T-cell (primary cell): ENCODE measurements at regions of chr9 and their contacts with region 1.

Region 1: DNA sequence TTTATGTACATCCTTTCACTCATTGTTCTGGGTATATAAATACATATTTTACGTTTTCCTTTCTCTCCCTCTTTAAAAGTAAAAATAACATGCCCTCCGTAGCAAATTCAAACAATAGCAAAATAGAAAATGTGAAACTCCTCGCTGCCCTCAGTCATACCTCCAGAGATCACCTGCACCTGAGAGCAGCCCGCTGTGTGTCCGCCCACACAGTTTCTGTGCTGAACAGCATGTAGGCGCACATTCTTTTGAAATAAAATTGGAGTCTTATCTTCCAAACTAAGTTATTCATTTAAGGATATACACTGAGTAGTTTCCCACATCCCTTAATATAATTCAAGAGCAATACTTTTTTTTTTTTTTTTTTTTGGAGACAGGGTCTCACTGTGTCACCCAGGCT is 255.7 kb downstream of the AOPEP start:
- DNase-seq: no peak
- ATAC-seq: no peak
- H3K4me3 ChIP-seq: no peak overlapping the region
- H3K4me3 Mint-ChIP-seq: no peak overlapping the region
- H3K27ac ChIP-seq: no peak overlapping the region
- H3K27ac Mint-ChIP-seq: no peak overlapping the region
- H3K4me1 ChIP-seq: peaks cover 2 to 8% of the 10 kb centered on the region in 2 experiments
- H3K4me1 Mint-ChIP-seq: peaks cover 13 to 15% (median 14%) of the 10 kb centered on the region in 3 donors
- H3K27me3 ChIP-seq: peaks cover 0 to 7% of the 10 kb centered on the region in 2 experiments
- H3K27me3 Mint-ChIP-seq: no peaks in the 10 kb centered on the region

Region 2: DNA sequence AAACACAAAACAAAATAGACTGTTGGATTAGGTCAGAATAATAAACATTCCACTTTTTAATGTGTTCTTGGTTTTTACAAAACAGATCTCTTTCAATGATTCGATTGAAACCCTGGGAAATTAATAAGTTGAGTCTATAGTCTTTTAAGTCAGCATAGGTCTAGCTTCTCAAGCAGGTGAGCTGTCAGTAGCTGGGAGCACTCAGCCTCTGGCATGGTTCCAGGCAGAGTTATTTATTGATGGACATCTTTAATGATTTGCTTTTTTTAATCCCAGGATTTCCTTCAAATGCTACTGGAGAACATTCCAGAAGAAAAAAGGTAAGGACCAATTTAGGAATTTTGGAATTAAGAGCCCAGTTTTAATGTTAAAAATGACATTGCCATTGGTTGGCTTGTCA is 14.7 kb before region 1 on chr9:
- CTCF ChIA-PET with region 1: no interaction called
- POLR2A ChIA-PET with region 1: no interaction called
- DNase-seq: no peak
- ATAC-seq: no peak
- H3K4me3 ChIP-seq: no peak overlapping the region
- H3K4me3 Mint-ChIP-seq: no peak overlapping the region
- H3K27ac ChIP-seq: no peak overlapping the region
- H3K27ac Mint-ChIP-seq: no peak overlapping the region
- H3K4me1 ChIP-seq: no peaks in the 10 kb centered on the region
- H3K4me1 Mint-ChIP-seq: no peaks in the 10 kb centered on the region
- H3K27me3 ChIP-seq: no peaks in the 10 kb centered on the region
- H3K27me3 Mint-ChIP-seq: no peaks in the 10 kb centered on the region

Region 3: DNA sequence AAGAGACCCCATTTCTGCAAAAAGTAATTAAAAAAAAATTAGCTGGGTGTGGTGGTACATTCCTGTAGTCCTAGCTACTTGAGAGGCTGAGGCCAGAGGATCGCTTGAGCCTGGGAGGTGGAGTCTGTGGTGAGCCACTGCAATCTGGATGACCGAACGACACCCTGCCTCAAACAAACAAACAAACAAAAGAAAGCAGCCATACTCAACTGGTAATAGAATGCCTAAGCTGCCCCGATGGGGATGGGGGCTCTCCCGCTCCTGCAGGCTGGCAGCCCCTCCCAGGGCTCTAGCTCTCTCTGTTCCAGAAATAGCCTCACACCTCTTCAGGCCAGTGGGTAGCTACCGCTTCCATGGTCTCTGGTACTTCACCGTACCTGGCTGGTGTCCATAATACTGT is 93.5 kb after region 1 on chr9:
- CTCF ChIA-PET with region 1: no interaction called
- POLR2A ChIA-PET with region 1: interaction called in 1 of 2 experiments, 12 read pairs
- DNase-seq: no peak
- ATAC-seq: no peak
- H3K4me3 ChIP-seq: no peak overlapping the region
- H3K4me3 Mint-ChIP-seq: no peak overlapping the region
- H3K27ac ChIP-seq: no peak overlapping the region
- H3K27ac Mint-ChIP-seq: no peak overlapping the region
- H3K4me1 ChIP-seq: no peaks in the 10 kb centered on the region
- H3K4me1 Mint-ChIP-seq: no peaks in the 10 kb centered on the region
- H3K27me3 ChIP-seq: no peaks in the 10 kb centered on the region
- H3K27me3 Mint-ChIP-seq: no peaks in the 10 kb centered on the region